ENCODE measurements at regions of chr5 and their contacts with region 1.

Region 1: DNA sequence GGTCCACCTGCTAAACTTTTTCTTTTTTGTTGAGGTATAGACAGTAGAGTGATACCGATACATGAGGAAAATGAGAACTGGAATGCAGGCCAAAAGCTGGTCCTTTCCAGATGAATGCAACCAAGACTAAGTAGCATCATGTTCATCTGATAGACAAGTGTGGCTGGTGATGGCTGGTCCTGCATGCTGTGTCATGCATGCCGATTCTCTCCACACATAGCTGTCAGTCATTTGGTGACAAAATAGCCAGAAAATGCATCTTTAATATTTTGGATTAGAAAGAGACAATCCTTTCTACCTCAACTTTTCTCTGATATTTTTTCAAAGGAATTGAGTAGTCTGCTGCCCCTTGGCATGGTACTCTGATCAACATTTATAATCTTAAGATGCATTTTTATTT is 49.9 kb downstream of the ZSWIM6 start:
- DNase-seq: no peak
- ATAC-seq: no peak
- H3K4me3 ChIP-seq: no peak overlapping the region
- H3K4me3 Mint-ChIP-seq: no peak overlapping the region
- H3K27ac ChIP-seq: no peak overlapping the region
- H3K27ac Mint-ChIP-seq: no peak overlapping the region
- H3K4me1 ChIP-seq: no peaks in the 10 kb centered on the region
- H3K4me1 Mint-ChIP-seq: peaks cover 10% of the 10 kb centered on the region
- H3K27me3 ChIP-seq: no peaks in the 10 kb centered on the region
- H3K27me3 Mint-ChIP-seq: no peaks in the 10 kb centered on the region
- CTCF ChIP-seq: no peak

Region 2: DNA sequence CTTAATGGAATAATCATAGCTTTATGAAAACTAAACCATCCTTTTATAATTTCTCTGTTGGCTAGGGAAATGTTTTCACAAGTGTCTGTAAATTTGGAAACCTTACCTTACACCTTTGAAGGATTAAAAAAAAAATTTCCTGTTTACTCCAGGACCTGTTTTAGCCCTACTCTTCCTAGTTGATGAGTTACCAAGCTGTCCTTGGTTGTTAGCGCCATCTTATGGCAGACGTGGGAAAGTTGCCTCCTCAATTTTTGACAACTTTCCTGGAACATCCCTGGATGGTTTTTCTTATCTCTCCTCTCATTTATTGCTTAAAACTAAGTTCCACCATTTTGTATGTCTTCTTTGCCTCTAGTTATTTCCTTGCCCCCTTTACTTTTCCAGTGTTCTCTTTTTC is 24.2 kb before region 1 on chr5:
- CTCF ChIA-PET with region 1: no interaction called
- POLR2A ChIA-PET with region 1: no interaction called
- intact Hi-C with region 1: no loop called
- DNase-seq: peak in 4 of 14 experiments; percentile 7 to 41 (median 22)
- ATAC-seq: no peak
- H3K4me3 ChIP-seq: no peak overlapping the region
- H3K4me3 Mint-ChIP-seq: no peak overlapping the region
- H3K27ac ChIP-seq: no peak overlapping the region
- H3K27ac Mint-ChIP-seq: no peak overlapping the region
- H3K4me1 ChIP-seq: no peaks in the 10 kb centered on the region
- H3K4me1 Mint-ChIP-seq: peaks cover 35% of the 10 kb centered on the region
- H3K27me3 ChIP-seq: no peaks in the 10 kb centered on the region
- H3K27me3 Mint-ChIP-seq: no peaks in the 10 kb centered on the region
- CTCF ChIP-seq: no peak

Region 3: GRCh38 chr5:61449804-61450492 is 68.0 kb after region 1 on chr5:
- CTCF ChIA-PET with region 1: no interaction called
- POLR2A ChIA-PET with region 1: no interaction called
- intact Hi-C with region 1: loop called in 1 of 2 experiments (anchors 2 kb)
- DNase-seq: no peak
- ATAC-seq: no peak
- H3K4me3 ChIP-seq: no peak overlapping the region
- H3K4me3 Mint-ChIP-seq: no peak overlapping the region
- H3K27ac ChIP-seq: no peak overlapping the region
- H3K27ac Mint-ChIP-seq: no peak overlapping the region
- H3K4me1 ChIP-seq: no peaks in the 10 kb centered on the region
- H3K4me1 Mint-ChIP-seq: peaks cover 7% of the 10 kb centered on the region
- H3K27me3 ChIP-seq: no peaks in the 10 kb centered on the region
- H3K27me3 Mint-ChIP-seq: no peaks in the 10 kb centered on the region
- CTCF ChIP-seq: no peak

Region 4: GRCh38 chr5:61823781-61824180 is 441.8 kb after region 1 on chr5:
- CTCF ChIA-PET with region 1: no interaction called
- POLR2A ChIA-PET with region 1: no interaction called
- intact Hi-C with region 1: no loop called
- DNase-seq: no peak
- ATAC-seq: no peak
- H3K4me3 ChIP-seq: no peak overlapping the region
- H3K4me3 Mint-ChIP-seq: no peak overlapping the region
- H3K27ac ChIP-seq: no peak overlapping the region
- H3K27ac Mint-ChIP-seq: no peak overlapping the region
- H3K4me1 ChIP-seq: no peaks in the 10 kb centered on the region
- H3K4me1 Mint-ChIP-seq: no peaks in the 10 kb centered on the region
- H3K27me3 ChIP-seq: no peaks in the 10 kb centered on the region
- H3K27me3 Mint-ChIP-seq: peaks cover 14% of the 10 kb centered on the region
- CTCF ChIP-seq: no peak

Measured in CD4-positive, alpha-beta T cell (primary cell).